AG04449 (cell line): ENCODE measurements at regions of chr1 and their contacts with region 1.

Region 1: DNA sequence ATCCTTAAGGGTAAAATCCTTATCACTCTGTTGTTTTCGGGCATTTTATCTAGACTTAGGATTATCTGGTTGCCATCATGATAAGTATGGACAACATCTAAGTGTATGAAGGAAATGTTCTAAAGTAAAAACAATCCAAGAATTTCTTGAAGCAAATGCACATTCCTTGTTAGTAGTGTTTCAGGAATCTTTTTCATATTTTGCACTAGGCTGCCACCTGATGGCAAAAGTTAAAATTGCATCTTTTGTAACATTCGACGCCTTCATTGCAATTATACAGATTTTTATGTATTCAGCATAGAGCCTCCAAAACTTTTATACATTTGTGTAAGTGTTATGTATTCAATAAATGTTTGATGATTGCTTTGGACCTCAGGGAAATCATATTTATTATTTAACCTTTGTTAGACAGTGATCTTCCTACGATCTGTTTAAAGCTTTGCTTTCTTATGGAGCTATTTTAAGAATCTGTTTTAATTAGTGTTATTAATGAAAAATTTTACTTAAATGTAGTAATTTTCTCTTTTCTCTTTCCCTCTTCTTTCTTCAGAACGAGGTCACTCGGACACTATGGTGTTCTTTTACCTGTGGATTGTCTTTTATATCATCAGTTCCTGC is 49.4 kb upstream of the KIAA1614 start:
- DNase-seq: no peak
- H3K4me3 ChIP-seq: no peak overlapping the region
- CTCF ChIP-seq: peak; percentile 43

Region 2: DNA sequence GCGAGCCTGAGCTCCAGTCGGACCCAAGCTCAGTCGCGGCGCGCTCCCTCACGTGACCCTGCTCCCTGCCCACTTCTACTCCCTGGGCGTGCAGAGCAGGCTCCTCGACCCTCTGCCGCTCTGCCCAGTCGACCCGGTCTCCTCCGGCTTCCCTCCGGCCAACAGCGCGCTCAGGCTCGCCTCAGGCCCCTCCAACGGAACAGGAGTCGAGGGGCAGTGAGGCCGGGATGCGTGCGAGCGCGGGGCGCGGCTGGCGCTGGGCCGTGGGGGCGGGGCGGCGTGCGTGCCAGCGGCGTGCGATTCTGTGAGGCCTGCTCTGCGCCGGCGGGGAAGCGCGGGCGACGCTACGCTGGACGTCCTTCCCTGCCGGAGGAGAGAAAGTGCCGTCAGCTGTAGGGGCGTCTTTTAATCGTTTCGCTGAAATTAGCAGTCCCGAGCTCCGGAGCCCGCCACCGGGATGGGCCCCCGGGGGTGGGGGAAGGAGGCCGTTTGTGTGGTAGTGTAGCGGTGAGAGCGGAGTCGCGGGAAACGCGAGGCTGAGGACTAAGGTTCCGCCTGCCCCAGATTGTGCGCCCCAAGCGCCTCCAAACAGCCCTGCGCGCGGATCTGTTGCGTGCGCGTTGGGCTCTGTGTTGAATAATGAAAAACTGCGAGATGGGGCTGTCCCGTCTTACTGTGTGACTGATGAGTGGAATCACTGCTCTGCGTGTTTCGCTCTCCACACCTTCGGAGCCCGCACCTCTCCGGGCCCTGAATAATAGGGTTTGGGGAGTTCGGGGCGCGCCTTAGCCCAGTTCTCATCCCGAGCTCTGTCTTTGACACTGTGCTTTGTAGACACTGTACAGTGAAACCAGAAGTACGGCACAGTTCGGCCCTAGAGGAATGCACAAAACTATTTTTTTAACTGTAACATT is 360.6 kb before region 1 on chr1 and contains the start of gene ACBD6:
- CTCF ChIA-PET with region 1: interaction called, 35 read pairs
- POLR2A ChIA-PET with region 1: interaction called, 3 read pairs
- DNase-seq: no peak
- H3K4me3 ChIP-seq: peak within 1 kb of the TSS; percentile 91
- CTCF ChIP-seq: peak; percentile 14

Region 3: DNA sequence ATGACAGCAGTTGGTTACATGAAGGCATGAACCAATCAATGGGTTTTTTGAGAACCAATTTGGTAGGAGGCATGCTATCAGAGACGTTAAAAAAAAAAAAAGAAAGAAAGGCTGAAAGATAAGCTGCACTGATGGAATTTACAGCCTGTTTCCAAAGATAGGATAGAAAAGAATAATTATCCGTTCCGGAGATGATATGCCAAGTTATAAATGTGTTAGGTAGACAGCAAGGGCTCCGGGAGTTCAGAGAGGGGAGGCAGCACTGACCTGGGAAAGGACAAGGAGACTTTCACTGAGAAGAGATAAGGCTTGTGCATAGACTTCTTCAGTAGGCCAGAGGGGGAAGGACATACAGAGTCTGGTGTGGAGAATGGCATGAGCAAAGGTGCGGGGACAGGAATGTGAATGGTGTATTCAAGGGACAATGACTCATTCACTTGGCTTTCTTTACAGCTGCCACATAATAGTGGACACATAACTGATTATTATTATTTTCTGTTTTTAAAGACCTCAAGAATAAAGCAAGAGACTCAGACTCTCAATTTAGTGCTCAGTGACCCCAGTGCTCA is 336.1 kb before region 1 on chr1:
- CTCF ChIA-PET with region 1: interaction called, 249 read pairs
- POLR2A ChIA-PET with region 1: no interaction called
- DNase-seq: no peak
- H3K4me3 ChIP-seq: no peak overlapping the region
- CTCF ChIP-seq: no peak

Region 4: GRCh38 chr1:180611016-180611930 is 252.0 kb before region 1 on chr1:
- CTCF ChIA-PET with region 1: interaction called, 16 read pairs
- POLR2A ChIA-PET with region 1: no interaction called
- DNase-seq: no peak
- H3K4me3 ChIP-seq: no peak overlapping the region
- CTCF ChIP-seq: no peak

Region 5: DNA sequence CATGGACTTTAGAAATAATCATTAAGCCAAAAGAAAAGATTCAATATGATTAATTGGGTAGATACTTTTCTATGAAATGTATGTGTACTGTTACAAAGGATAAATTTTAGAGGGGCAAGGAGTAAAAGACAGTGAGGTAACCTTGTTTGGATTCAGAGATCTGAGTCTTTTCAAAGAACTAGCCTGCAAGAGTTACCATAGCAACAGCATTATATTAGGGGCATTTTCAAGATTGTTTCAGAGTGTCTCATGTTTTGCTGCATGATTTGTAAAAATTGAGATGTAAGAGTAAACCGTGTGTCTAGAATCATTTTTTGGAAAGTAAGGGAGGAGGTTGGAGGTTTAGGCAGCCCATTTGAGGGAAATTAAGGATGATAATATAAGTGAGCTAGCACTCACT is 21.2 kb before region 1 on chr1:
- CTCF ChIA-PET with region 1: interaction called, 17 read pairs
- POLR2A ChIA-PET with region 1: no interaction called
- DNase-seq: peak; percentile 46
- H3K4me3 ChIP-seq: no peak overlapping the region
- CTCF ChIP-seq: no peak